Common myeloid progenitor, CD34-positive (primary cell): ENCODE measurements at regions of chr19 and their contacts with region 1.

Region 1: GRCh38 chr19:45455707-45456499 is 11.9 kb upstream of the FOSB start:
- DNase-seq: peak; percentile 95 to 98 (median 96)
- H3K4me3 ChIP-seq: peak overlapping the region in 4 of 7 experiments; percentile 26 to 68 (median 54)
- H3K27ac ChIP-seq: peak overlapping the region; percentile 61 to 86
- H3K4me1 ChIP-seq: peaks cover 0 to 37% (median 31%) of the 10 kb centered on the region in 4 experiments
- H3K27me3 ChIP-seq: peaks cover 0 to 2% (median 0%) of the 10 kb centered on the region in 5 experiments

Region 2: GRCh38 chr19:45306518-45307027 is 149.3 kb before region 1 on chr19:
- CTCF ChIA-PET with region 1: no interaction called
- POLR2A ChIA-PET with region 1: no interaction called
- DNase-seq: no peak
- H3K4me3 ChIP-seq: no peak overlapping the region
- H3K27ac ChIP-seq: no peak overlapping the region
- H3K4me1 ChIP-seq: peaks cover 0 to 3% (median 1%) of the 10 kb centered on the region in 4 experiments
- H3K27me3 ChIP-seq: peaks cover 0 to 2% (median 0%) of the 10 kb centered on the region in 5 experiments

Region 3: GRCh38 chr19:45439569-45440254 is 16.2 kb before region 1 on chr19:
- CTCF ChIA-PET with region 1: interaction called, 12 read pairs
- POLR2A ChIA-PET with region 1: interaction called, 5 read pairs
- DNase-seq: peak; percentile 75 to 87 (median 86)
- H3K4me3 ChIP-seq: peak overlapping the region; percentile 50 to 77 (median 66)
- H3K27ac ChIP-seq: peak overlapping the region in 1 of 2 experiments; percentile 43
- H3K4me1 ChIP-seq: peaks cover 0 to 33% (median 26%) of the 10 kb centered on the region in 4 experiments
- H3K27me3 ChIP-seq: peaks cover 0 to 12% (median 0%) of the 10 kb centered on the region in 5 experiments